PC-9 (cell line): ENCODE measurements at regions of chr2 and their contacts with region 1.

Region 1: GRCh38 chr2:86062043-86062442 is 43.6 kb downstream of the POLR1A start:
- DNase-seq: peak in 1 of 2 experiments; percentile 91
- H3K4me3 ChIP-seq: peak overlapping the region; percentile 23; the same call in 1 of the 2 replicates
- H3K27ac ChIP-seq: peak overlapping the region; percentile 80
- H3K4me1 ChIP-seq: peaks cover 59% of the 10 kb centered on the region
- H3K27me3 ChIP-seq: no peaks in the 10 kb centered on the region
- CTCF ChIP-seq: no peak

Region 2: GRCh38 chr2:85772019-85772745 is 289.9 kb before region 1 on chr2:
- CTCF ChIA-PET with region 1: no interaction called
- POLR2A ChIA-PET with region 1: no interaction called
- intact Hi-C with region 1: no loop called
- DNase-seq: peak; percentile 82 to 97
- H3K4me3 ChIP-seq: peak overlapping the region; percentile 41; the same call in 1 of the 2 replicates
- H3K27ac ChIP-seq: no peak overlapping the region
- H3K4me1 ChIP-seq: peaks cover 20% of the 10 kb centered on the region
- H3K27me3 ChIP-seq: peaks cover 6% of the 10 kb centered on the region; the same call in 1 of the 2 replicates
- CTCF ChIP-seq: no peak

Region 3: GRCh38 chr2:85935746-85936208 is 126.3 kb before region 1 on chr2:
- CTCF ChIA-PET with region 1: no interaction called
- POLR2A ChIA-PET with region 1: no interaction called
- intact Hi-C with region 1: loop called (anchors 1 kb)
- DNase-seq: peak; percentile 69 to 97
- H3K4me3 ChIP-seq: peak overlapping the region; percentile 21; the same call in 1 of the 2 replicates
- H3K27ac ChIP-seq: peak overlapping the region; percentile 87
- H3K4me1 ChIP-seq: peaks cover 77% of the 10 kb centered on the region
- H3K27me3 ChIP-seq: no peaks in the 10 kb centered on the region
- CTCF ChIP-seq: no peak